Activated T-helper 1 cell treated with anti-CD3 and anti-CD28 coated beads, Interleukin-12 subunit alpha, Interleukin-12 subunit beta, Interleukin-2, Interleukin-4 antibody, amounts not matched to agents 30 ng/mL and 10 ng/mL and 1 ng/mL, durations not matched to agents 14 hours and 24 hours and 36 hours (primary cell): ENCODE measurements at regions of chr2 and their contacts with region 1.

Region 1: GRCh38 chr2:23460228-23460627 is 75.2 kb downstream of the KLHL29 start:
- DNase-seq: no peak
- H3K4me3 Mint-ChIP-seq: no peak overlapping the region
- H3K27ac Mint-ChIP-seq: no peak overlapping the region
- H3K4me1 Mint-ChIP-seq: no peaks in the 10 kb centered on the region
- H3K27me3 Mint-ChIP-seq: peaks cover 11% of the 10 kb centered on the region

Region 2: GRCh38 chr2:22904126-22904684 is 556.0 kb before region 1 on chr2:
- intact Hi-C with region 1: loop called (anchors 5 kb)
- DNase-seq: no peak
- H3K4me3 Mint-ChIP-seq: no peak overlapping the region
- H3K27ac Mint-ChIP-seq: no peak overlapping the region
- H3K4me1 Mint-ChIP-seq: no peaks in the 10 kb centered on the region
- H3K27me3 Mint-ChIP-seq: peaks cover 6% of the 10 kb centered on the region

Region 3: DNA sequence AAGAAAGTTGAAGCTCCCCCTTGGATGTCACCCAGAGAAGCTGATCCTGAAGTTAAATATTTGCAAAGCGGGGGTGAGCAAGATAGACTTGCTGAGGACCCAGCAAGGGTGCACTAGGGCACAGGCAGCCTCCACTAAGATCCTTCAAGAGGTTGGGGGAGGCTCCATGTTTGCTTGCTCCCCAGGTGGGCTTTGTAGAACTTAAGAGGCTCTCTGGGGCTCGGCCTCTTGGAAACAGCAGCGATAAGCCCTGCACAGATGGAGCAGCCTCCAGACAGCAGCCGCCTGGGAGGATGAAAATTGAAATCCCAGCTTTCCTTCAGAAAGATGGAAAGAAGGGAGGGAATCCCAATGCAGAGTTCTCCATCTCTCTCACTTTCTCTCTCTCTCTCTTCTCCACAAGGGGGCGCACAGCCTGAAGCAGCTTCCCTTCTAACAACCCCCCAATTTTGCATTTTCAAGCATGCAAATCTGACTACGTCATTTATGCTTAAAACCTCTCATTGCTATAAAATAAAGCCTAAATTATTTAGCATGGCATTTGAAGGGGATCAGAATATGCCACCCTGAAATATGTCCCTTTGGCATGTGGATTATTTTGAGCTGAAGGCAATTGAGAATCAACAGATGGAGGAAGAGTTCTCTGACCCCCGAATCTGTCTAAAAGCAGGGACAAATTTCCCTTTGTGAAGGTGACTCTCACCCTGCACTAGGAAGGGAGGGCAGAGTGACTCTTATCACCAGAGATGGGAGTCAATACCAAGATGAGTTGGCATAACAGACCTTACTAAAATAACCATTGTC is 260.9 kb before region 1 on chr2:
- intact Hi-C with region 1: loop called (anchors 2 kb)
- DNase-seq: no peak
- H3K4me3 Mint-ChIP-seq: no peak overlapping the region
- H3K27ac Mint-ChIP-seq: no peak overlapping the region
- H3K4me1 Mint-ChIP-seq: no peaks in the 10 kb centered on the region
- H3K27me3 Mint-ChIP-seq: peaks cover 2% of the 10 kb centered on the region